B cell (primary cell): ENCODE measurements at regions of chr12 and their contacts with region 1.

Region 1: GRCh38 chr12:95942524-95943329 is at the start of gene CCDC38:
- DNase-seq: peak; percentile 85
- ATAC-seq: peak; percentile 88
- H3K4me3 ChIP-seq: peak within 1 kb of the TSS; percentile 68 to 94 (median 89)
- H3K4me3 Mint-ChIP-seq: peak within 1 kb of the TSS; percentile 98
- H3K27ac ChIP-seq: peak within 1 kb of the TSS; percentile 71 to 87
- H3K27ac Mint-ChIP-seq: peak within 1 kb of the TSS; percentile 92
- H3K4me1 ChIP-seq: peaks cover 9 to 11% of the 10 kb centered on the region in 2 donors
- H3K4me1 Mint-ChIP-seq: peaks cover 10% of the 10 kb centered on the region
- H3K27me3 ChIP-seq: no peaks in the 10 kb centered on the region
- H3K27me3 Mint-ChIP-seq: no peaks in the 10 kb centered on the region
- CTCF ChIP-seq: no peak
- total RNA-seq, gene CCDC38: 1.00 and 1.3 TPM in 2 replicates

Region 2: DNA sequence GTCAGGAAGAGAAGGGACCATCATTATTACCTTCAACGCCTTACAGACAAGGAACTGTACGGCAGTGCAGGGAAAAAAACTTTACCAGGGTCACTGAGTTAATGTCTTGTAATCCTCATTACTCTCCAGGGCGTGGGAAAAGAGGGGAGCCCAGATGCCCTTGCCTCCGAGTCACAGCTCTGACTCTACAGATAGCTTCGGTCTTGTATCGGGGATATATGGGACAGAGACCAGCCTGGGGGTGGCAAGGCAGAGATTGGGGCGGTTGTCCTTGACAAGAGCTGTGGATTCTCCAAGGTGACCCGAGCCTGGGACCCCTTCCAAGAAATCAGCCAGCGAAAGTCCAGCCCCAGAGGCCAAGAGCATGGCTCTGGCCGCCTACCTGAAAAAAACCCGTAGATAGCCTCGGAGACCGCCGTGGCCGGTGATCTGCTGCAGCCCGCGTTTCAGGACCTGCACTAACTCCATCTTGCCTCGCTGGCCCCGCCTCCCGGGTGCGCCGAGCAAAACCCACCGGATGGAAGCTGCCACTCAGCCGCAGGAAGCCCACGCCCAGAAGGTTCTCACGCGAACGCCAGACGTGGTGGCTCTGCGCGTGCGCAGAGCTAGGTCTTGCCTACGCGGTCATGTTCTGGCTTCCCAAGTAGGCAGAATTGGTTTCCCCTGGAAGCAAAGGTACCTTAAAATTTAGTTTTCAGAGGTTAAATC is 939.4 kb before region 1 on chr12 and contains the start of gene NDUFA12:
- CTCF ChIA-PET with region 1: no interaction called
- POLR2A ChIA-PET with region 1: no interaction called
- intact Hi-C with region 1: loop called (anchors 5 kb)
- DNase-seq: peak; percentile 96
- ATAC-seq: peak; percentile 100
- H3K4me3 ChIP-seq: peak within 1 kb of the TSS; percentile 75 to 98 (median 81)
- H3K4me3 Mint-ChIP-seq: peak within 1 kb of the TSS; percentile 98
- H3K27ac ChIP-seq: peak within 1 kb of the TSS; percentile 82
- H3K27ac Mint-ChIP-seq: peak within 1 kb of the TSS; percentile 98
- H3K4me1 ChIP-seq: peaks cover 15 to 24% of the 10 kb centered on the region in 2 donors
- H3K4me1 Mint-ChIP-seq: peaks cover 38% of the 10 kb centered on the region
- H3K27me3 ChIP-seq: no peaks in the 10 kb centered on the region
- H3K27me3 Mint-ChIP-seq: no peaks in the 10 kb centered on the region
- CTCF ChIP-seq: no peak
- total RNA-seq, gene NDUFA12: 41.7 and 42.0 TPM in 2 replicates

Region 3: DNA sequence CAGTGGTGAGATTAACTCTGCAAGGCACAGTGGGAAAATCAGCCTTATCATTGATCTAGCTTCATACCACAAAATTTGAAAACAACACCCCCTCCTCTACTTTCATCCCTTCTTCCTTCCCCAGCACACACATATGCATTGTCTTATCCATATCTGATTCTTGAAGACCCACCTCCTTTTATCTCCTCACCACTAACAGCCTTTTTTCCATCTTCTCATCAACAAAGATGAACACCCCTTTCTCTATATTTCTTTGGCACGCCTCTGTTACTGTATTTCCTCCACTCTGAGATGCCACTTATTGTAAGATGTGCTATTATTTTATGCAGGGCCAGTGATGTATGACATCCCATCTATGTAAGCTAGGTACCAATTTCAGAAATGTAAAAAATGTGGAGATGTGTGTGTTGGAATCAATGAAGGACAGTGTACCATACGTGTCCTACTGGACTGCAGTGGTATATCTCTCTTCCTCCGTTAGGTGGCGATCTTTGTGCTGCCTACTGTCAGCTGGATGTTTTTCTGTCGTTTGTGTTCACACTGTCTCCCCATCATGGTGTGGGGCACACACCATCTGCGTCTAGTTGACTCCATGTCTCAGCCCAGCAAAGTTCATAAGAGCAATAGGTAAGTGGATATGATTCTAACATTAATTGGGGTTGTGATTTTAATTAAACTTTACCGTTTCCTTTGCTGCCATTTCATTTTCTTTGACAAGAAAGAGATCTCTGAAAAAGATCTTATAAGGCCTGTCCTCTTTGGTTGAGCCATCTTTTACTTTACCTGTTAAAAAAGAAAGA is 24.3 kb before region 1 on chr12:
- CTCF ChIA-PET with region 1: interaction called, 24 read pairs
- POLR2A ChIA-PET with region 1: no interaction called
- intact Hi-C with region 1: no loop called
- DNase-seq: peak; percentile 70
- ATAC-seq: peak; percentile 90
- H3K4me3 ChIP-seq: no peak overlapping the region
- H3K4me3 Mint-ChIP-seq: no peak overlapping the region
- H3K27ac ChIP-seq: no peak overlapping the region
- H3K27ac Mint-ChIP-seq: no peak overlapping the region
- H3K4me1 ChIP-seq: peaks cover 4% of the 10 kb centered on the region in 2 donors
- H3K4me1 Mint-ChIP-seq: no peaks in the 10 kb centered on the region
- H3K27me3 ChIP-seq: peaks cover 0 to 2% (median 0%) of the 10 kb centered on the region in 4 experiments
- H3K27me3 Mint-ChIP-seq: peaks cover 3% of the 10 kb centered on the region
- CTCF ChIP-seq: peak; percentile 88